ENCODE measurements at regions of chrX and their contacts with region 1.

Region 1: DNA sequence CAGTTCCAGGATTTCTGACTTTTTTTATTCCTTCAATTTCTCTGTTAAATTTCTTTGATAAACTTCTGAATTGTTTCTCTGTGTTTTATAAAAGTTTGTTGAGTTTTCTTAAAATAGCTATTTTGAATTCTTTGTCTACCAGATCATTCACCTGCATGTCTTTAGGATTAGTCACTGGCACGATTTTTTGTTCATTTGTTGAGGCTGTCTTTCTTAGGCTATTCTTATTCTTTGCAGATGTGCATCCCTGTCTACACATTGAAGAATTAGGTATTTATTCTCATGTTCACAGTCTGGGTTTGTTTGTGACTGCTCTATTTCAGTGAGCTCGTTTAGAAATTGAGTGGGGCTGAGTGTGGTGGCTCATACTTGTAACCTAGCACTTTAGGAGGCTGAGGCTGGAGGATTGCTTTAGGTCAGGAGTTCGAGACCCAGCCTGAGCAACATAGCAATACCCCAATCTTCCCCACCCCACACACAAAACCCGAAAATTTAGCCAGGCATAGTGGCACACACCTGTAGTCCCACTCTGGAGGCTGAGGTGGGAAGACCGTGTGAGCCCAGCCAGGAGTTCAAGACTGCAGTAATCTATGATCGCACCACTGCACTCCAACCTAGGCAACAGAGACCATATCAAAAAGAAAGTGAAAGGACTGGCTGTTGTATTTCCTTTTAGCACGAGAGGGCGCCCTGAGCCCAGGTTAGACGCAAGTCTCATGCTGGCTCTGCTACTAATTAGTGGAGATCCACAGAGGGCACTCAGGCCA is 42.0 kb downstream of the F8 start:
- DNase-seq: peak; percentile 87
- H3K4me3 Mint-ChIP-seq: peak overlapping the region; percentile 79
- H3K27ac Mint-ChIP-seq: no peak overlapping the region
- H3K4me1 Mint-ChIP-seq: peaks cover 8% of the 10 kb centered on the region
- H3K27me3 Mint-ChIP-seq: no peaks in the 10 kb centered on the region

Region 2: DNA sequence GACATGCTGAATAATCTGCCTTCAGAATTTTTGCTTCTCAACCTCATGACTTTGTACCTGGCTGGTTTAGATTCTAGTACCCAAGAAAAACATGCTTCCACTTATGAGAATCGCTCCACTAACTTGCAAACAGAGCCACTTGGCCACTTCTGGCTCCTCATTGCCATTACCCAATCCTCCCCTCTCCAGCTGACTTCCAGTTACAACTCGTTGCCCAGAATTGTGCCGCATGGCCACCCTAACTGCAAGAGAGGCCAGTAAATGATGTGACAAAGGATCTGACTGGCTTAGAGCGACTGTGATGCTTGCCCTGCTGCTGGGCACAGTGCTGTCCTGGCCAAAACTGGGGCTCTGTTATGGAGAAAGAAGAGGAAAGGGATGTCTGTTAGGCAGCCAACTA is 221.8 kb before region 1 on chrX:
- CTCF ChIA-PET with region 1: no interaction called
- intact Hi-C with region 1: no loop called
- DNase-seq: no peak
- H3K4me3 Mint-ChIP-seq: no peak overlapping the region
- H3K27ac Mint-ChIP-seq: no peak overlapping the region
- H3K4me1 Mint-ChIP-seq: peaks cover 9% of the 10 kb centered on the region
- H3K27me3 Mint-ChIP-seq: no peaks in the 10 kb centered on the region

Region 3: GRCh38 chrX:154918060-154918483 is 62.4 kb before region 1 on chrX:
- CTCF ChIA-PET with region 1: interaction called, 7 read pairs
- intact Hi-C with region 1: loop called (anchors 1 kb)
- DNase-seq: peak; percentile 19
- H3K4me3 Mint-ChIP-seq: peak overlapping the region; percentile 55
- H3K27ac Mint-ChIP-seq: no peak overlapping the region
- H3K4me1 Mint-ChIP-seq: no peaks in the 10 kb centered on the region
- H3K27me3 Mint-ChIP-seq: no peaks in the 10 kb centered on the region

Region 4: DNA sequence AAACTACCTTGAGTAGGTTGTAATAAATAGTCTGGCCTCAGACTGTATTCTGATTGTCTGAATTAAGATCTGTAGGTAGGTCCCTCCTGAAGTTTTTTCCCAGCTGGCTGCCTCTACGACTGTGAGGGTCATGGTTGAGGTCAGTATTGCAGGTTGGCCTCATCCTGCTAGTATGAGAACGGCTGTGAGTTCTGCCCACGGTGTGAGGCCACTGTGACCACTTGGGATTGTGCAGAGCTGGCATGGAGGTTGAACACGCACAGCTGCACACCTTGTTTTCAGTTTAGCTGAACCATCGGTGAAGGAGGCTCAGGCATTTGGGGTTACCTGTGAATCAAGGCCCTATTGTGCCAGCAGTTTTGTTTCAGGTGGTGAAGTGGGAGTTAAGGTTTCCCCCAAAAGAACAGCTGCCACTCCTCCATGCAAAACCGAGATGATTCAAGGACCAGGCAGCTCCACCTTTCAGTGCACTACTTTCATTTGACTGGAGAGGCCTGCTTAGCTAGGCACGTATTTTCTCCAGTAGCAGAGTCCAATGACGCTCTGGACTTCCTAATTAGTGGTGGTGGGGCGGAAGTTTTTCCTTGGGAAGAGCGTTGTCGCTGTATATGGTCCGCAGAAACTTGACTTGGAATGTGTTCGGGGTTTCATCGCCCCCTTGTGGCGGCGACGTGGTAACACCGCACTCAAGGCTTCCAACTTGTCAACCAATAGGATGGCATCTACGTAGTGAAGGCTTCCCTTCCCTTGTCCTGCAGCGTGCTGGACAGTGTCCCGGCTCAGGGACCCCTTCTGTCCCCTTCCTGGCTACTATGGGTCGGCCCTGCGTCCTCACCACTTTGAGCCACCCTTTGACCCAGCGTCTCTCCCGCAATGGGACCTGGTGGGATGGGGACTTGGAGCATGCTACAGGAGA is 76.6 kb after region 1 on chrX:
- CTCF ChIA-PET with region 1: interaction called, 19 read pairs
- intact Hi-C with region 1: loop called (anchors 1 kb)
- DNase-seq: peak; percentile 57
- H3K4me3 Mint-ChIP-seq: peak overlapping the region; percentile 48
- H3K27ac Mint-ChIP-seq: peak overlapping the region; percentile 53
- H3K4me1 Mint-ChIP-seq: peaks cover 29% of the 10 kb centered on the region
- H3K27me3 Mint-ChIP-seq: no peaks in the 10 kb centered on the region

Region 5: DNA sequence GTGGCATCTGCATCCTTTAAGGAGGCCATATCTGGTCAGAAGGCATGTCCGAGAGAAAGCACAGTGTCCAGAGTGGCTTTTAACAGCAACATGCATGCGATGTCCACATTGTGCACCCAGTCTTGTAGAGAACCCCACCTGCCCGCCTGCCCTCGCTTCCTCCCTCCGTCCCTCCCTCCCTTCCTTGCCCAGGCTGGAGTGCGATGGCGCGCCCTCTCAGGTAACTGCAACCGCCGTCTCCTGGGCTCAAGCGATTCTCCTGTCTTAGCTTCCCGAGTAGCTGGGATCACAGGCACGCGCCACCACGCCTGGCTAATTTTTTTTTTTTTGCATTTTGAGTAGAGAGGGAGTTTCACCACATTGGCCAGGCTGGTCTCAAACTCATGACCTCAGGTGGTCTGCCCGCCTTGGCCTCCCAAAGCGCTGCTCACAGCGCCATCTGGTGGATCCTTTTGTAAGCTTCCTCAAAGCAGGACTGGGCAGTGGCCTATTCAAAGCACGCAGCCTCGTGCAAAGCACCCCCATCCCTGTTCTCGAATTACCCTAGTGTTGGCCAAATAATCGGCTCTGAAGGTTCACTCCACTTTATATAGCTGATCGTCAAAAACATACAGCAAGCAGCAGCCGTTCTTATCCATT is 105.8 kb after region 1 on chrX:
- CTCF ChIA-PET with region 1: interaction called, 3 read pairs
- intact Hi-C with region 1: loop called (anchors 1 kb)
- DNase-seq: peak; percentile 51
- H3K4me3 Mint-ChIP-seq: no peak overlapping the region
- H3K27ac Mint-ChIP-seq: no peak overlapping the region
- H3K4me1 Mint-ChIP-seq: no peaks in the 10 kb centered on the region
- H3K27me3 Mint-ChIP-seq: no peaks in the 10 kb centered on the region

Region 6: DNA sequence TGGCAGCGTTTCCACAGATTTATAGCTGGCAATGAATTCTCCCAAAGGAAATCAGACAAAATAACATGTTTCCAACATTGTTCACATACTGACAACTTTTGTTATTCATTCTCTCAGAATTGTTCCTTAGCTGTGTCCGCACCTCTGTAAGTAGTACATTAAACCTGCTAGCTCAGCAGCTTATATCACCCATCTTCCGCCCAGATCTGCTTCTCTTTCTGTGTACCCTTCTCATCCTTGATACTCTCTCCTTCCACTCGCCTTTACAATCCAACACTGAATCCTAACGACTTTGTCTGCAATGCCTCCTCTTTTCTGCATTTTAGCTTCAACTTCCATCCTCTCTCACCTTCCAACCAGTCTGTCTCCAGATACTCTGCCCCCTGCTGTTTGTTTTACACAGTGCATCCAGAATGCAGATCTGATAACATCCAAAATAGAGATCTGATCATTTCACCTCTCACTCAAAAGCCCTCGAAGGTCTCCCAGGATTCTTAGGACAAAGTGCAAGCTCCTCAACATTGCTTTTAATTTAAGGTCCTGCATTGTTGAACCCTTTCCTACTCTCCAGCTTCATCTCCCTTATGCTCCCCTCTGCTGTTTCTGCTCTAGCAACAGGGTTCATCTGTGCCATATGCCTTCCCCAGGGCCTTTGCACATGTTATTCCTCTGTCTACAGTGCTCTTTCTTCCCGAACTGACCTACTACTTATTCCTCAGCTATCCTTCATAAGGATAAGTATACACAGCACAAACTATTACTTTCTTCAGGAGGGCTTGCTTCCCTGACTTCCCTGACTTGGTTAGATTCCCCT is 168.4 kb after region 1 on chrX:
- CTCF ChIA-PET with region 1: interaction called, 3 read pairs
- intact Hi-C with region 1: loop called (anchors 1 kb)
- DNase-seq: peak; percentile 61
- H3K4me3 Mint-ChIP-seq: no peak overlapping the region
- H3K27ac Mint-ChIP-seq: no peak overlapping the region
- H3K4me1 Mint-ChIP-seq: peaks cover 2% of the 10 kb centered on the region
- H3K27me3 Mint-ChIP-seq: no peaks in the 10 kb centered on the region

Region 7: DNA sequence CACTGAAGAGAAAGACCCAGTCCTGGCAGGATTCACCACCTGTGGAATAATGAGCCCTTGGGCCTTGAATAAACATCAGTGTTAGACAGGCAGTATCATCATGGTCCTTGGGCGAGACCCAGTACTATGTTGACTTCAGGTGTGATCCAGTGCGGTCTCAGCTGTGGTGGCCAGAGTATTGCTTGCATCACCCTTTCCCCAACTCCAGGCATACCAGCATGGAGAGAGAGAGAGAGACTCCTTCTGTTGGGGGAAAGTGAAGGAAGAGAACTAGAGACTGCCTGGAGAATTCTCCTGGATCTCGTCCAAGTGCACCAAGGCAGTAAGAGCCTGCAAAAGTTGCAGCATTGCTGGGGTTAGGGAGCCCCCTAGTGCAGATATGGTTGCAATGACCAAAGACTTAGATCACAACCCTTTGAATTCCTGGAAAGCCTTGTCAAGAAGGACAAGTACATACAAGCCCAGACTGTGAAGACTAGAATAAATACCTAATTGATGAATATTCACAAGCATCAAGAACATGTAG is 839.5 kb after region 1 on chrX:
- CTCF ChIA-PET with region 1: no interaction called
- intact Hi-C with region 1: loop called (anchors 2 kb)
- DNase-seq: peak; percentile 66
- H3K4me3 Mint-ChIP-seq: no peak overlapping the region
- H3K27ac Mint-ChIP-seq: no peak overlapping the region
- H3K4me1 Mint-ChIP-seq: no peaks in the 10 kb centered on the region
- H3K27me3 Mint-ChIP-seq: peaks cover 12% of the 10 kb centered on the region